ENCODE measurements at regions of chr2 and their contacts with region 1.

Region 1: DNA sequence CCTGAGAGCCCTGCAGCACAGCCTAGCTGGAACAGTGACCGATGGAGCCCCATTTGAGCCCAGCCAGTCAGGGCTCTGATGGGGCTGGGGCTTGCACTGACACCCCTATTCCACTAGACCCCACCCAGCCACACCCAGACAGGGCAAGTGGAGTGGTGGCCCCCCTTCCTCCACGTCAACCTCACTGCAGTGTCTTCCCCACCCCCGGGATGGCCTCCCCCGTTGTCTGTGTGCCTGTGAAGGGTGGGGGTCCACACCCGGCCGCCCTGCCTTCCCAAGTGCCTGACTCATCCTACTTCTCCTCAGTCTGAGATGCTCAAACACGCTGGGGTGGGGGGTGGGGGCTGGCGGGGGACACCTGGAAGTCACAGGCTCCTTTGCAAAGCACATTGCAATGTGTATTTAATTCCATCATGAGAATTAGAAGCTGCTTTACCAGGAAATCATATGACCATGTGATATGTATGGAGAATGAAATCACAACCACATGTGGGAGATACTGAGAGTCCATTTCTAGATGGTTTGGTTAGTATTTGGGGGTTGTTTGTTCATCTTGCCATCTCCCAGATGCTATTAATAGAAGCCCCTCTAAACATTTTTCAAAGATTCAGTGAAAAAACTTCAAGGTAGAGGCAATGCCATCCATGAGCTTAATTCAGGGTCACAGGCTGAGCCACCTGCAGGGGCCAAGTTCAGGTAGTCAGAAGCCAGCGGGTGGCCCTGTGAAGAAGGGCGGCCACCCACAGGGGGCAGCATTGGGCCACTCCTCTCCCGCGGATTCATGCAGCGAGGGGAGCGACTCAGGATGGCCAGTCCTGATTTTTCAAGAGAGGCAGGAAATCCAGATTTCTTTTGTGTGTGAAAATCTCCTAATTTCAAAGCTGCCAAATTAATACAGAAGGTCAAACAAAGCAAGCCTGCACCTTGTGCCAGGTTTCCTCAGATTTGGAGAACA is 22.7 kb upstream of the GMPPA start:
- DNase-seq: peak; percentile 94
- H3K4me3 ChIP-seq: no peak overlapping the region
- H3K27ac ChIP-seq: peak overlapping the region; percentile 36 to 74; a peak in 3 of 4 replicates
- H3K4me1 ChIP-seq: peaks cover 0 to 42% of the 10 kb centered on the region in 2 experiments; a peak in 1 of 4 replicates
- H3K27me3 ChIP-seq: no peaks in the 10 kb centered on the region
- CTCF ChIP-seq: peak; percentile 95
- EP300 ChIP-seq: no peak; a peak in 1 of 4 replicates
- RAD21 ChIP-seq: peak; percentile 91

Region 2: DNA sequence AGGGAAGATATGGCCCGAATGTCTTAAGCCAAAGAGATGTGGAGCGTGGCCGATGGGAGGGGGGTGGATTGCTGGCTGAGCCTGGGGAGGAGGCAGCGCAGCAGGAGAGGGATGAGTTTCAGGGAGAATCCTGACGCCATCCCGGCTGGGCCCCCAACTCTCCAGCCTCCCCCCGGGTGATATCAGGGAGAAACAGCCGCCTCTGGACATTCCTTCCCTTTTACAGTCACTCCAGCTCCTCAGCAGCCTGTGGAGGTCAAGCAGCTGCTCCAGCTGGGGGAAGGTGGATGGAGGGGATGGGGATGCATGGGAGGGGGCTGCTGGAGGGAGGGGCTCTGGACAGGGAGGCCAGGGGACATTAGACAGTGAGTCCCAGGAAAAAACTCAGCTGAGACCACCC is 67.3 kb before region 1 on chr2:
- CTCF ChIA-PET with region 1: interaction called, 73 read pairs
- POLR2A ChIA-PET with region 1: interaction called, 3 read pairs
- DNase-seq: no peak
- H3K4me3 ChIP-seq: no peak overlapping the region
- H3K27ac ChIP-seq: no peak overlapping the region
- H3K4me1 ChIP-seq: peaks cover 3 to 21% of the 10 kb centered on the region in 2 experiments; a peak in 3 of 4 replicates
- H3K27me3 ChIP-seq: no peaks in the 10 kb centered on the region
- CTCF ChIP-seq: no peak
- EP300 ChIP-seq: no peak
- RAD21 ChIP-seq: no peak

Region 3: GRCh38 chr2:219430633-219431615 is 45.0 kb before region 1 on chr2:
- CTCF ChIA-PET with region 1: interaction called, 18 read pairs
- POLR2A ChIA-PET with region 1: no interaction called
- DNase-seq: peak; percentile 89
- H3K4me3 ChIP-seq: no peak overlapping the region
- H3K27ac ChIP-seq: peak overlapping the region in 1 of 2 experiments; percentile 77; a peak in 2 of 4 replicates
- H3K4me1 ChIP-seq: peaks cover 0 to 13% of the 10 kb centered on the region in 2 experiments; a peak in 1 of 4 replicates
- H3K27me3 ChIP-seq: no peaks in the 10 kb centered on the region
- CTCF ChIP-seq: peak; percentile 50
- EP300 ChIP-seq: 0 out of 4 replicates have a peak, but pooled peaks of 1 of the 2 experiments have one; percentile 10
- RAD21 ChIP-seq: peak; percentile 85

Region 4: DNA sequence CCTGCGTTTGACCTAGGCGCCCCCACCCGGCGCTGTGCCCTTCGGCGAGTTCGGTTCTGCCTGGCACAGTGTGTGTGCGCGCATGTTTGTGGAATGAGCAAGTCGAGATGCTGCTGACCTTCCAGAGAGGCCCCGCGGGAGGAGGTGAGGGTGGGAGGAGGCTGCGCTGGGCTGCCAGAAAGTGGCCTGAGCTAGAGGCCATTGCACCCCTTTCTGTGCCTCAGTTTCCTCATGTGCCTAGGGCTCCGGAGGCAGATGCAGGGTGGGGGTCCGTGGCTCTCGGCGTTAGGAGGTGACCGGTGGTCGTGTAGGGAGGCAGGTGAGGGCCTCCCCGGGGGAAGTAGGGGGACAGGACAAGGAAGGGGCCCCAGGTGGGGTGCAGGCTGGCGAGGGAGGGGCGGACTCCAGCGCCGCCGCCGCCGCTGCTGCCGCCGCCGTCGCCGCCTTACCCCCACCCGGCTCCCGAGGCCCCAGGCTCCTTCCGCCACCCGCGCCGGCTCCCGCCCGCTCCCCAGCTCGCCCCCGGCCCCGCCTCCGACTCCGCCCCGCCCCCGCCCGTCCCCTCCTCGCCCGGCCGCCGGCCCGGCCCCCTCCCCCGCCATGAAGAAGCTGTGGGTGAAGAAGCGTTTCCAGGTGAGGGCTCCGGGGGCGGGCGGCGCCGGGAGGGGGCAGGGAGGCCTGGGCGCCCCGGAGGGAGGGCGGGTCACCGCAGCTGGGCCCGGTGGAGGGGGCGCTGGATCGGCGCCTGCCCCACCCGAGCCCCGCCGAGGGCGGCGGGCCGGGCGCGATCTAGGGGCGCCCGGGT is 34.3 kb before region 1 on chr2:
- CTCF ChIA-PET with region 1: interaction called, 12 read pairs
- POLR2A ChIA-PET with region 1: no interaction called
- DNase-seq: peak; percentile 98
- H3K4me3 ChIP-seq: peak overlapping the region; percentile 67 to 76
- H3K27ac ChIP-seq: peak overlapping the region; percentile 52 to 84; a peak in 3 of 4 replicates
- H3K4me1 ChIP-seq: peaks cover 45 to 49% of the 10 kb centered on the region in 2 experiments
- H3K27me3 ChIP-seq: no peaks in the 10 kb centered on the region
- CTCF ChIP-seq: no peak; the same call in 1 of the 2 replicates
- EP300 ChIP-seq: no peak
- RAD21 ChIP-seq: no peak